Posterior vena cava (tissue), 2 donors: ENCODE measurements at regions of chr17 and their contacts with region 1.

Region 1: GRCh38 chr17:74457146-74457819 is 9.2 kb upstream of the CD300A start:
- DNase-seq: peak; percentile 95

Region 2: GRCh38 chr17:74212913-74213791 is 244.1 kb before region 1 on chr17 and contains the start of gene TTYH2:
- intact Hi-C with region 1: loop called in 1 of 2 experiments (anchors 10 kb)
- DNase-seq: peak; percentile 95
- total RNA-seq, gene TTYH2: 3.2 to 5.5 TPM

Region 3: GRCh38 chr17:74379495-74380085 is 77.7 kb before region 1 on chr17:
- intact Hi-C with region 1: loop called (anchors 2 to 5 kb)
- DNase-seq: peak; percentile 97